B cell (primary cell): ENCODE measurements at regions of chr7 and their contacts with region 1.

Region 1: DNA sequence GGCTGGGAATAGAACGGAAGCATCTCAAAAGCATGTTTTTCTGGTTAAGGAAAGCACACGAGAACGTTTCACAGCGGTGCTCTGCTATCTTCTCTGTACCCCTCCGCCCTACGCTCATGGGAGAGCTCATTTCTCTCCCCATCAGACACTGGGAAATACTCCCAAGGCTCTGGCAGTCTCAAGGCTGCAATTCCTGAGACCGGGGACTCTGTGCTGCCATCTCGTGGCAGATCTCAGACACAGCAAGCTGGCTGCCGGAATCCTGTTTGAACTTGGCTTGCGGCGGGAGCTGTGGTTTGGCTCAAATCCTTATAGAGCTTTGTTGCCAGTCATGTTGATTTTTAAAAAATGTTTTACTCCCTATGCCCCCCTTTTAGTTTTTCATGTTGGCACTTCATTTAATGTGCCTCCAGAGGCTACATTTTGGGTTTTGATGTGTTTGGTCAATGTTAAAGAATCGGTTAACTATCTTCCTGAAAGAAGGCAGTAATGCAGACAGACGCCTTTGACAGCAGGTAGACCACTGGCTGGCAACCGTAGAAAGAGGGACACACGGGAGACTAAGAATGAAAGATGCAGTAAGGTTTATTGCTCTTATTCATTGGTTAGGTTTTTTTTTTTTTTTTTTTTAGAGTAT is 27.6 kb downstream of the BMPER start:
- DNase-seq: peak; percentile 65
- ATAC-seq: peak; percentile 53
- H3K4me3 ChIP-seq: no peak overlapping the region
- H3K4me3 Mint-ChIP-seq: no peak overlapping the region
- H3K27ac ChIP-seq: no peak overlapping the region
- H3K27ac Mint-ChIP-seq: no peak overlapping the region
- H3K4me1 ChIP-seq: no peaks in the 10 kb centered on the region
- H3K4me1 Mint-ChIP-seq: no peaks in the 10 kb centered on the region
- H3K27me3 ChIP-seq: peaks cover 0 to 18% (median 6%) of the 10 kb centered on the region in 4 experiments
- H3K27me3 Mint-ChIP-seq: peaks cover 9% of the 10 kb centered on the region
- CTCF ChIP-seq: peak; percentile 90

Region 2: DNA sequence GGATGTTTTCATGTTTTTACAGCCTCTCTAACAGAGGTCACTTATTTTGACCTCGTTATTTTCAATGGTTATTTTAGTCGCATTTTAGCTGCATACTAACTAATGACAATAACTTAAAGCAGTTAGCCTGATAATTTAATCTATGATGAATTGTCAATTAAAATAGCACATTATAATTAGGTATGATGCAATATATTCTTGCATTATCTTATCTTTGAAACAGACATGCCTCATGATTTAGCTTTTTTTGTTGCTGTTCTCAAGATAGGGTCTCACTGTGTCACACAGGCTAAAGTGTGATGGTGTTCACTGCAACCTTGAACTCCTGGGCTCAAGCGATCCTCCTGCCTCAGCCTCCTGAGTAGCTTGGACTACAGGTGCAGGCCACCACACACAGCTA is 1167.8 kb before region 1 on chr7:
- CTCF ChIA-PET with region 1: interaction called, 8 read pairs
- POLR2A ChIA-PET with region 1: no interaction called
- intact Hi-C with region 1: loop called (anchors 2 kb)
- DNase-seq: no peak
- ATAC-seq: no peak
- H3K4me3 ChIP-seq: no peak overlapping the region
- H3K4me3 Mint-ChIP-seq: no peak overlapping the region
- H3K27ac ChIP-seq: no peak overlapping the region
- H3K27ac Mint-ChIP-seq: no peak overlapping the region
- H3K4me1 ChIP-seq: peaks cover 19 to 21% of the 10 kb centered on the region in 2 donors
- H3K4me1 Mint-ChIP-seq: peaks cover 15% of the 10 kb centered on the region
- H3K27me3 ChIP-seq: peaks cover 0 to 26% (median 18%) of the 10 kb centered on the region in 4 experiments
- H3K27me3 Mint-ChIP-seq: peaks cover 45% of the 10 kb centered on the region
- CTCF ChIP-seq: no peak

Region 3: DNA sequence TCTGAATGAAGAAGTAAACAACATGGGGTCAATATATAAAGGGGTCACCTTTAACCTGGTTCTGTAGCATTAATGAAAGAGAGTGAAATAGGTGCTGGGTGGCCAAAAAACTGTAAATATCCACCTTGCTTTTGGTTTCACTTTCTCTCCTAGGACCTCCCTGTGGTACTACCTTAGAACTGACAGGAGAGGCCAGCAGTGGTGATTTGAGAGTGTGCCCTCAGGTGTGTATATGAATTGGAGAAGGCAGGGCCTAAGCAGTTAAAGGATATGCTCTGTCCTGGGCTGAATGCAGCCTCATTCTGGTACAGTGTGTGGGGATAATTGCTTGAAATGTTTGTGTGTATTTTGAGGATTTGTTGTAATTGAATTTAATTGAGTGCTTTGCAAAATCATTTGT is 741.6 kb before region 1 on chr7:
- CTCF ChIA-PET with region 1: interaction called, 89 read pairs
- POLR2A ChIA-PET with region 1: no interaction called
- intact Hi-C with region 1: no loop called
- DNase-seq: peak; percentile 25
- ATAC-seq: peak; percentile 47
- H3K4me3 ChIP-seq: no peak overlapping the region
- H3K4me3 Mint-ChIP-seq: peak overlapping the region; percentile 43
- H3K27ac ChIP-seq: no peak overlapping the region
- H3K27ac Mint-ChIP-seq: peak overlapping the region; percentile 20
- H3K4me1 ChIP-seq: peaks cover 20 to 21% of the 10 kb centered on the region in 2 donors
- H3K4me1 Mint-ChIP-seq: peaks cover 30% of the 10 kb centered on the region
- H3K27me3 ChIP-seq: no peaks in the 10 kb centered on the region
- H3K27me3 Mint-ChIP-seq: no peaks in the 10 kb centered on the region
- CTCF ChIP-seq: no peak

Region 4: DNA sequence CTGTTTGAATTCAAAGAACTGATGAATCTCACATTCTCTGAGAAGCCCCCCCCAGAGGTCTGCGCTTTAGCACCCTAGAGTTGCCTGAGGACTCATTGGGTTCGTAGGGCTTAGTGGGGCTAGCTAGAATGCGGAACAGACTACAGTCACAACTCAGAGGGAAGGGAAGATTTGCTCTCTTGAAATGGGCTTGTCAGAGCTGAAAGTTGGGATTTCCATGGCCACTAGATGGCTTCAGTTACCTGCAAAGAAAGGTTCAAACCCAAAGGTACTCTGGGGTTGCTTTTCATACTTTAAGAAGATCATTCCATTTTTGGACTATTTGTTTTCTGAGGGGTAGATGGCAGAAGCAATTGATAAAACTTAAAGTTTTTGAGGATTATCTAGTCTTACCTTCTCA is 598.6 kb before region 1 on chr7:
- CTCF ChIA-PET with region 1: interaction called, 11 read pairs
- POLR2A ChIA-PET with region 1: no interaction called
- intact Hi-C with region 1: no loop called
- DNase-seq: no peak
- ATAC-seq: no peak
- H3K4me3 ChIP-seq: no peak overlapping the region
- H3K4me3 Mint-ChIP-seq: no peak overlapping the region
- H3K27ac ChIP-seq: no peak overlapping the region
- H3K27ac Mint-ChIP-seq: no peak overlapping the region
- H3K4me1 ChIP-seq: no peaks in the 10 kb centered on the region
- H3K4me1 Mint-ChIP-seq: no peaks in the 10 kb centered on the region
- H3K27me3 ChIP-seq: no peaks in the 10 kb centered on the region
- H3K27me3 Mint-ChIP-seq: no peaks in the 10 kb centered on the region
- CTCF ChIP-seq: no peak

Region 5: GRCh38 chr7:33921216-33921938 is 11.6 kb before region 1 on chr7:
- CTCF ChIA-PET with region 1: interaction called, 12 read pairs
- POLR2A ChIA-PET with region 1: no interaction called
- intact Hi-C with region 1: no loop called
- DNase-seq: no peak
- ATAC-seq: no peak
- H3K4me3 ChIP-seq: no peak overlapping the region
- H3K4me3 Mint-ChIP-seq: no peak overlapping the region
- H3K27ac ChIP-seq: no peak overlapping the region
- H3K27ac Mint-ChIP-seq: no peak overlapping the region
- H3K4me1 ChIP-seq: no peaks in the 10 kb centered on the region
- H3K4me1 Mint-ChIP-seq: no peaks in the 10 kb centered on the region
- H3K27me3 ChIP-seq: peaks cover 0 to 4% (median 0%) of the 10 kb centered on the region in 4 experiments
- H3K27me3 Mint-ChIP-seq: peaks cover 16% of the 10 kb centered on the region
- CTCF ChIP-seq: no peak